Ascending aorta (tissue), 2 donors: ENCODE measurements at regions of chr9 and their contacts with region 1.

Region 1: DNA sequence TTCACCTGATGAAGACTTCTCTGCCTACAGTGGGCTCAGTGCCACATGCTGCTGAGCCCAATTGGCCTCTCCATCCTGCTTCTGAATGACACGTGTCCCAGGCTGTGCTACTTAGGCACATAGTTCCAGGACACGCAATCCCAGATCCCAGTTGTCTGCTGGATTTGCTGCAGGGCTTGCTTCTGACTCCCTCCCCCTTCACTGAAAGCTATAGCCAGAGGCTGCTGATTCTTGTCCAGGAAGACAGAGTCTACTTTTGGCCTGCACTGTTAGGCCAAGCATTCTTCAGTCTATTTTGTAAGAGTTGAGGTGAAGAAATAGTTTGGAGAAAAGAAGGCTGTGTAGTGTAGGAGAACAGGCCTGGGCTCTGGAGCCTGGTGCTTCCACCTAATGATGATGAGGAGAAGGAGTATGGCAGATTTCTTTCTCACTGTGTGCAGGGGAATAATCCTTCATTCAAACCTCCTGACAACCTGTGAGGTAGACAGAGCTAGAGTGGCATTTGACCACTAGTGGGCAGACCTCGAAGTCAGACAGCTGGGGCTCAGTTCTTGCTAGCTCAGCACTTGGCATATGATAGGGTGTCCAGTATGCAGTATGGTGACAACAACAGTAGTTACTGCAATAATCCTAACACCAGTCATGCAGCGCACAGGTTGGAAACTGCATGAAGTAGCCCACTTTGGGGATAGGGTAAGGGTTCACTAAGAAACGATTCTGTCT is 19.5 kb upstream of the ASPN start:
- DNase-seq: peak; percentile 21 to 86
- H3K4me3 ChIP-seq: no peak overlapping the region
- H3K27ac ChIP-seq: peak overlapping the region; percentile 60 to 76
- H3K4me1 ChIP-seq: peaks cover 23 to 36% of the 10 kb centered on the region in 2 donors
- H3K27me3 ChIP-seq: no peaks in the 10 kb centered on the region
- CTCF ChIP-seq: peak in 2 of 3 experiments; percentile 22 to 37

Region 2: DNA sequence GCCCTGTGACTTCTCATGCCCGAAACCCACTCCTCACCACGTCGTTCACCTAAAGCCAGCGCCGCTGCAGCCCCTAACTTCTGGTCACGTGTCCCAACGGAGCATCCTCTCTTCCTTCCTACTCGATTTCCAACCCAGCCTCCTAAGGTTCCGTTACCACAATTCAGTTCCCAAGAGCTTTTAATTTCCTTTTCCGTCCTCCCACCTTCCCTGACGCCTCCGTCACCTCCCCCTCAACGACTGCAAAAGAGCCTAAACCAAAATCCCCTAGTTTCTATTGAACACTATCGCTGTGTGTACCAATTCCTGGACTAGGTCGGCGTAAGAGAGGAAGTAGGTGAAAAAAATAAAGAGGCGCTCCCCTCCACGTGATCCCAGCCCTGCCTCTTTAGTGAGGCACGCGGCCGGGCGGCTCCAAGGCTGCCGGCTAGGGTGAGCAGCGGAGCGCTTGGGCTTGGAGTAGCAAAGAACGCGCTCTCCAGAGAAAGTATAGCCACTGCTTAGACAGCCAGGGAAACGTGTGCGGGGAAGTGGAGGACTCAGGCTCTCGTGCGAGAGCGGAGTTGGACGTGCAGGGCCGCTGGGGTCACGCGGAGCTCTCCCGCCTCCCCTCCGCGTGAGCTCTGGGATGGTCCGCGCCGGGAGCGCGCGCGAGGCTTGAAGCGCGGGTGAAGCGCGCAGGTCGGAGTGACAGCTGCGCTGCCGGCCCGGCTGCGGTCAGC is 176.4 kb before region 1 on chr9 and contains the starts of genes CENPP and NOL8:
- intact Hi-C with region 1: loop called (anchors 2 kb)
- DNase-seq: peak; percentile 42 to 92
- H3K4me3 ChIP-seq: peak within 1 kb of the TSS; percentile 75 to 80
- H3K27ac ChIP-seq: peak within 1 kb of the TSS; percentile 93 to 97
- H3K4me1 ChIP-seq: peaks cover 0 to 16% of the 10 kb centered on the region in 2 donors
- H3K27me3 ChIP-seq: no peaks in the 10 kb centered on the region
- CTCF ChIP-seq: no peak
- total RNA-seq, gene CENPP: 0.43 TPM
- total RNA-seq, gene NOL8: 11.5 TPM

Region 3: DNA sequence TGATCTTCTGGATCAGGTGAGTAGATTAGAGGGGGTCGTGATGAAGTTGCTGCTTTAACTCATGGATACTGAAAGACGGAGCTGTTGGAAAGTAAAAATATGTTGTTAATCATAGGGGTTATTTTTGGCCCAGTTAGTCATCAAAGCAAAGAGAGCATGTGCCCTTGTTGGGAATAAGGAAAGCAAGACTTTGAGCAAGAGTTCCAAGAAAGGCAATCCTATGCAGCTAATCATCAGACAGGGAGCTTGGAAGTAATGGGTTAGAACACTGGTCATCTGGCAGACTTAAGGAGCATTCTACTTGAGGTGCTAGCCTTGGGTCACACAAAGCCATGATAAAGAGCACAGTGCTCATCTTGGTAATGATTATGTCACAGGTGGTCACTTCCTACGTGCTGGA is 37.8 kb before region 1 on chr9:
- intact Hi-C with region 1: loop called (anchors 2 kb)
- DNase-seq: peak in 1 of 2 donors; percentile 73
- H3K4me3 ChIP-seq: no peak overlapping the region
- H3K27ac ChIP-seq: peak overlapping the region; percentile 94 to 95
- H3K4me1 ChIP-seq: peaks cover 3 to 22% of the 10 kb centered on the region in 2 donors
- H3K27me3 ChIP-seq: no peaks in the 10 kb centered on the region
- CTCF ChIP-seq: no peak

Region 4: DNA sequence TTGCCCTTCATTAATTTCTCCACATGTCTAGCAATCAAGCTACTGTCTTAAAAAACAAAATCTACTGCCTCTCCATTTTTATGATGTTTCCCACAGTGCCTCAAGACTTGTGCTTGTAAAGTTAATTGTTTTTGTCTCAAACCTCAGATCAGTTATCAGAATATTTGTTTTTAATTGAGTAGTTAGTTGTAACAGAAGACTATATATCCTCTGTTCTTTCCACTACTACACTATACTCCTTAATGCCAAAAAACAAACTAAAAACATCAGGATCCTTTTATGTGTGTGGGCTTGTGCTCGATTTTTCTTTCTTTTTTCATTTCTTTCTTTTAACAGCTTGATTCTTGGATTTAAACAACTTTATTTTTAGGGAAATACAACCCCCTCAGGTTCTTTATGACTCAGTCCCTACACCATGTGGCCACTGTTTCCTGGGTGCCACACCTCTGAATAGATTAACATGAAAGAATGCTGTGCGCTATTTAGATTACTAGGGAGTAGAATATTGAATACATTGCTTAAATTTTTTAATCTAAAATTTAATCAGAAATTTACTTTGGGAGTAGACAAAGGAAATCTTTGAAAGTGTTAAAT is 20.7 kb before region 1 on chr9:
- intact Hi-C with region 1: loop called (anchors 2 kb)
- DNase-seq: no peak
- H3K4me3 ChIP-seq: peak overlapping the region; percentile 35 to 51
- H3K27ac ChIP-seq: peak overlapping the region; percentile 90 to 92
- H3K4me1 ChIP-seq: peaks cover 0 to 37% of the 10 kb centered on the region in 2 donors
- H3K27me3 ChIP-seq: no peaks in the 10 kb centered on the region
- CTCF ChIP-seq: no peak

Region 5: DNA sequence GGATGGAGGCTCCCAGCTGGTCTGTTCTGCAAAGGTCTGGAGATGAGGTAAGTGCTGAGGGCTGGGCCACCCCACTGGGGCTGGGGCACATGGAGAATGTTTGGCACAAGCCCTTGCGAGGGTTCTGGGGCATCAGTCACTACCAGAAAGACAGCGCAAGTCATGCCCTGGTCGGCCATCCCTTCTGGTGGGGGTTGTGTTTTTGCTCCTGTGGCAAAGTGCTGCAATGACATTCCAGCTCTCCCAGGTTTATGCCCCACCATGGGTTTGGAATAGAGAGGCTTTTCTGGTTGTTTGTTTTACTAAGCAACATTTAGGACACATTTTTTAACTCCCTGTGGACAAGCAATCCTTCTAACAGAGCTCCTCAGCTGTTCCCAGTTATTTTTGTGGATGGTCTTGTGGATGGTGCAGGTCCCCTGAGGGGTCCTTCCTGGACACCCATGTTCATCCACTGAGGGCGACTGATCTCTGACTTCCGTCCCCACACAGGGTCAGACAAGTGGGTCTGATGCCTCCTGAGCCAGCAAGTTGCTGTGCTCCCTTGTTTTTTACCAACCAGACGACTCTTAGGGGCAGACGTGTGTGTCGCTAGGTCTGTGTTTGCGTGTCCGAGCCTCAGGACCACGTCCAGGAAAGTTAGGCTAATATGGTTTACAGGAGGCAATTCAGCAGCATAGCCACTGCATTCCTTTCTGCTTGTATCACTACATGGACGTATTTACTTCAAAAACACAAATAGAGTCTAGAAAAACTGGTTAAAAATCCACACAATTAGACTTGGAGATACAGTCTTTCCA is 98.8 kb after region 1 on chr9:
- intact Hi-C with region 1: loop called (anchors 5 kb)
- DNase-seq: no peak
- H3K4me3 ChIP-seq: peak overlapping the region in 1 of 2 donors; percentile 9
- H3K27ac ChIP-seq: peak overlapping the region; percentile 83 to 85
- H3K4me1 ChIP-seq: peaks cover 7 to 44% of the 10 kb centered on the region in 2 donors
- H3K27me3 ChIP-seq: no peaks in the 10 kb centered on the region
- CTCF ChIP-seq: no peak

Region 6: GRCh38 chr9:92808726-92809451 is 307.1 kb after region 1 on chr9:
- intact Hi-C with region 1: no loop called
- DNase-seq: peak in 1 of 2 donors; percentile 79
- H3K4me3 ChIP-seq: peak overlapping the region; percentile 39 to 45
- H3K27ac ChIP-seq: no peak overlapping the region
- H3K4me1 ChIP-seq: peaks cover 6 to 26% of the 10 kb centered on the region in 2 donors
- H3K27me3 ChIP-seq: peaks cover 35% of the 10 kb centered on the region
- CTCF ChIP-seq: peak in 1 of 3 experiments; percentile 32